ENCODE measurements at regions of chr2 and their contacts with region 1.

Region 1: DNA sequence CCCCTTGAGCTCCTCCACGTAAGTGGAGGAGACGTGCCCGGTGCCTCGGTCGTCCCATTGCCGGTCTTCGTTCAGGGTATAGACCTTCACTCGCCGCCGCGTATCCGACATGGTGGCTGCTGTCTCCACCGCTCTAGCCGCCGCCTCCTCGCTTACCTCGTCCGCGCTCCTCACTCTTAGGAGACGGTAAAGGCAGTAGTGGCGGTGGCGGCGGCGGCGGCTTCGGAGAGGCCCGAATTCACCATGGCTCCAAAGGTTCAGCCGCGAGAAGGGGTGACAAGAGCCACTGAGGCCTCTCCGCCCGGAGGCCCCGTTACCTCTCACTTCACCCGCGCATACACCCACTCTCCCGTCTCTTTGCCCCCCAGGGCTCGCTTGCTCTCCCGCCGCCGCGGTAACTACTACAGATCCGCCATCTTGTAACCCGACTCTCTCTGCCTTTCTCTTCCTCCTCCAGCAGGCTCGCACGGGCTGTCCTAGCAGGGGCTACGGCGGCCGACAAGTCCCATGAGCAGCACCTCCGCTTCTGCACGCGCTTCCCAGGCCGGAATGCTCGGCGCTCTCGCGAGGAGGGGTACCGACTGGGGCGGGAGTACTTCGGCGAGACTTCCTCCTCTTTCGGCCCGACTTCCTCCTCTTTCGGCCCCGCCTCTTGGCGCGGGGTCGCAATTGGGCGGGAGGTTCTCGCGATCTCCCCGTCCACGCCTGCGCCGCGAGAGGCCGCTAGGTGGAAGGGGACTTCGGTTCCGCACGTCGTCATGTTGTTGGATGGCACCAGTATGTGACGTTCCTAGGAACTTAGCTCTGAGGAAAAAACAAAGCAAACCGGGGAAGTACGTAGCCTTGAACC is at the start of gene PPP4R3B:
- DNase-seq: peak; percentile 100
- H3K4me3 Mint-ChIP-seq: no peak within 1 kb of the TSS
- H3K27ac Mint-ChIP-seq: no peak within 1 kb of the TSS
- H3K4me1 Mint-ChIP-seq: peaks cover 35% of the 10 kb centered on the region
- H3K27me3 Mint-ChIP-seq: no peaks in the 10 kb centered on the region
- total RNA-seq, gene PPP4R3B: 78.1 and 82.7 TPM in 2 replicates

Region 2: GRCh38 chr2:53970724-53971602 is 1646.4 kb before region 1 on chr2 and contains the start of gene PSME4:
- intact Hi-C with region 1: loop called (anchors 2 kb)
- DNase-seq: peak; percentile 98
- H3K4me3 Mint-ChIP-seq: peak within 1 kb of the TSS; percentile 93
- H3K27ac Mint-ChIP-seq: peak within 1 kb of the TSS; percentile 97
- H3K4me1 Mint-ChIP-seq: peaks cover 28% of the 10 kb centered on the region
- H3K27me3 Mint-ChIP-seq: no peaks in the 10 kb centered on the region
- total RNA-seq, gene PSME4: 49.6 and 52.1 TPM in 2 replicates

Region 3: DNA sequence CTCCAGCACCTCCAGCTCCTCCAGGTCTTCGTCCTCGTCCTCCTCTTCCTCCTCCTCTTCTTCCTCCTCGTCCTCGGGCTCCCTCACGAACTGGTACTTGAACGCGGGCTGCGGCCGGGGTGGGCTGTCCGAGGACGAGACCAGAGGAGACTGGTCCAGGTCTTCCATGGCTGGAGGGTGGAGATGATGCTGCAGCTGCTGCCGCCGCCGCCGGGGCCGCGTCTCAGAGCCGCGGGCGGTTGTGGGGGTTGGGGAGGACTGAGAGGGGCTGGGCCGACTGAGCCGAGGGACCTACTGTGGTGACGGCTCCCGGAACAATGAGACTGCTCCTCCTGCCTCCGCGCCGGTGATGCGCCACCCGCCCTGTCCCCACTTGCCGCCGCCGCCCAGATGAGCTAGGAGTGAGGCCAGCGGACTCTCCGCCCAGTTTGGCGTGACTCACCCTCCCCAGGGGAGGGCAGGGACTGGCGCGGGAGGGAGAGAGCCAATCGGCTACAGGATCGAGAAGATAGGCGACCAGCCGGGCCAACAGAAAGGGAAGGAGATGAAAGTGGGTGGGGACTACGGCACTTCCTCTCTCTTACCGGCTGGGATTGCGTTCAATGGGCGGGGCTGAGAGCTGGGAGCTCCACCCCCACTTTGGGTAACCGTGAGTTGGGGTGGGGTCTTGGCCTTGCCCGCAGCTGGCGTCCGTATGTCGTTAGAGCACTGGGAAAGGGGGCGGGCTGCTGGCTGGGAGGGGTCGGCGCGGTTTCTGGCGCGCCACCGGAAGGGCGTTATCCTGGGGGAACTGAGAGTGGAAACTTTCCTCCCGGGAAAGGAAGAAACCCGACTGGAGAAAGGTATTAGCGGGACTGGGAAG is 567.0 kb before region 1 on chr2 and contains the start of gene RTN4:
- intact Hi-C with region 1: loop called (anchors 2 kb)
- DNase-seq: peak; percentile 99
- H3K4me3 Mint-ChIP-seq: peak within 1 kb of the TSS; percentile 97
- H3K27ac Mint-ChIP-seq: peak within 1 kb of the TSS; percentile 97
- H3K4me1 Mint-ChIP-seq: peaks cover 48% of the 10 kb centered on the region
- H3K27me3 Mint-ChIP-seq: no peaks in the 10 kb centered on the region
- total RNA-seq, gene RTN4: 86.9 and 90.1 TPM in 2 replicates

Region 4: DNA sequence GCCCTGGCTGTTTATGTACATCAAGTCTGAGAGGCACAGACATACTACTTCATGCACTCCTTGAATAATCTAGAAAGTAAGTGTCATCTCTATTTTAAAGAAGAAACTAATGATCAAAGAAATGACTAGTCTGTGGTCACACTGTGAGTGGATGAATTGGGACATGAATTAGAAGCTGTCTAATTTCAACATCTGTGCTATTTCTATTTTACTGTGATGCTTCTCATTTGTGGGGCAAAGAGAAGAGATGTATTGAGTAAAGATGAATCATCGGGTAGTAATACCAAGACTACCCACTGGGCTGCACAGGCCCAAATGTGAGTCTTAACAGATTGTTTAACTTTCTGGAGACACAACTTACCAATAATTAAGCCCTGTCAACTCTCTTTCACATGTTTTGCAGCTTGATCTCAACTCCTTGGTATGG is 305.9 kb before region 1 on chr2:
- intact Hi-C with region 1: loop called (anchors 1 kb)
- DNase-seq: no peak
- H3K4me3 Mint-ChIP-seq: no peak overlapping the region
- H3K27ac Mint-ChIP-seq: peak overlapping the region; percentile 54
- H3K4me1 Mint-ChIP-seq: peaks cover 14% of the 10 kb centered on the region
- H3K27me3 Mint-ChIP-seq: no peaks in the 10 kb centered on the region

Region 5: DNA sequence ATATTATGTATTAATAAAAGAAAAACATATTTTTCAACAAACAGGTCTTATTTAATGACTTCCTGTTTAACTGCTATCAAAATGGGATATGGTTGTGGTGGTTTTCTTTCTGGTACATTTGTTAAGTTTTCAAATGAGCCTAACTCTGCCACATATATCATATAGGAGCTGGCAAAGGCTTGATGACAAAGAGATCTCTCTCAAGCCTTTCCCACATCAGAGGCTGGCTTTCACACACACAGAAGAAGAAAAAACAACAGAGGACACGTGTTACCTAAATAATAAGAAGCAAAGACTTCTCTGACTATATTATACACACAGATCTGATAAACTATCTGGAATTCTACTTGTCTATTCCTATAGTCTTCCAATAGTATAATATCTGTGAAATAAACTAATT is 51.8 kb before region 1 on chr2:
- intact Hi-C with region 1: loop called (anchors 10 kb)
- DNase-seq: no peak
- H3K4me3 Mint-ChIP-seq: no peak overlapping the region
- H3K27ac Mint-ChIP-seq: peak overlapping the region; percentile 41
- H3K4me1 Mint-ChIP-seq: peaks cover 7% of the 10 kb centered on the region
- H3K27me3 Mint-ChIP-seq: no peaks in the 10 kb centered on the region

Region 6: GRCh38 chr2:55693181-55694134 is 76.1 kb after region 1 on chr2 and contains the start of gene PNPT1:
- intact Hi-C with region 1: loop called (anchors 1 kb)
- DNase-seq: peak; percentile 99
- H3K4me3 Mint-ChIP-seq: peak within 1 kb of the TSS; percentile 98
- H3K27ac Mint-ChIP-seq: peak within 1 kb of the TSS; percentile 96
- H3K4me1 Mint-ChIP-seq: peaks cover 29% of the 10 kb centered on the region
- H3K27me3 Mint-ChIP-seq: peaks cover 6% of the 10 kb centered on the region
- total RNA-seq, gene PNPT1: 68.1 and 77.9 TPM in 2 replicates

Region 7: DNA sequence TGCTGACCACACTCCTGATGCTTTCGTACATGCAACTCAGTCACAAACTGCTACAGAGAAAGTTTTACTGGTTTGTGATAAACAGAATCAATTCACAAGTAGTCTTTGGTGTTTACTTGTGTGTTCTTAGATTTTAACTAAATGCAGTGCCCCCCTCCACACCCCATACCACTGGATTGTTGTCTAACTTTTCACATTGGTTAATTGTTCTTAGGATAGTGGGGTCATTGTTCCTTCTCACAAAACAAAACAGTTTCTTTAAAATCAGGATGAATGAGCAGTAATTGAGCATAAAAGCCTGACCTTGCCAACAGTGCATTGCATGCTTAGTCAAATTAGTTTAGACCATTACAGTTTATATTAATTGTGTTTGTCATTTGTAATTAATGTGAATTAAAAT is 90.4 kb after region 1 on chr2:
- intact Hi-C with region 1: no loop called
- DNase-seq: no peak
- H3K4me3 Mint-ChIP-seq: no peak overlapping the region
- H3K27ac Mint-ChIP-seq: no peak overlapping the region
- H3K4me1 Mint-ChIP-seq: no peaks in the 10 kb centered on the region
- H3K27me3 Mint-ChIP-seq: peaks cover 12% of the 10 kb centered on the region